Heart right ventricle (tissue), 16 donors: ENCODE measurements at regions of chr7 and their contacts with region 1.

Region 1: GRCh38 chr7:101804967-101805366 is 12.5 kb upstream of the CUX1 start:
- DNase-seq: no peak
- ATAC-seq: no peak
- H3K4me3 ChIP-seq: no peak overlapping the region
- H3K27ac ChIP-seq: no peak overlapping the region
- H3K4me1 ChIP-seq: peaks cover 0 to 12% (median 4%) of the 10 kb centered on the region in 9 donors
- H3K27me3 ChIP-seq: peaks cover 0 to 61% (median 32%) of the 10 kb centered on the region in 7 donors
- CTCF ChIP-seq: no peak

Region 2: DNA sequence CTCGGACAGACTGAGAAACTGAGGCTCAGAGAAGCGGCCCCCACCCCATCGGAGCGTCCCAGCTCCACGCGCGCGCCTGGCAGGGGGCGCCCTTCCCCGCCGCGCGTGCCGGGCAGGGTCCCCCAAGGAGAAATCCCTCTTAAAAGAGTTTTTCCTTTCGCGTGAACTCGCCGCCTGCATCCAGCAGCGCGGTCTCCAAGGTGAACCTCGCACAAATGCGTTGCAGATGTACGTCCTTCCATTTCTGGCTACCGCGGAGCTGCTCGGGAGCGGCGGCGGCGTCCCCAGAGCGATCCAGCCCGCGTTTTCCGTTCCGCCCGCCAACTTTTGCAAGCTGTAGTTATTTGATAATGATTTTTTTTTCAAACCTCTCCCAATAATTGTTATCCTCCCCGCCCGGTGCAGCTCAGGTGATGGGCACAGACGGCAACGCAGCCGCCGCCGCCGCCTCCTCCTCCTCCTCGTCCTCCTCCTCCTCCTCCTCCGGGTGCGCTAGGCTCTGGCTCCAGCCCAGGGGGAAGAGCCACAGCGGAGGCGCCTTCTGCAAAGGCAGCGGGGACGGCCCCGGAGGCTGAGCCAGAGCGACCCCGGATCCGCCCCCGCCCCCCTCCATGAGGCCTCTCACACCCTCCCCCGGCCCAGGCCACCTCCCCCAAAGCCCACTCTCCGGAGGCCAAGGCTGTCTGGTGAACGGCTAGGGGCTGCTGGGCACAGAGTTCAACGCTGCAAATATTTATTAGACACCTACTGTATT is 61.5 kb before region 1 on chr7:
- intact Hi-C with region 1: loop called in 6 of 10 experiments (anchors 5 to 10 kb)
- DNase-seq: peak; percentile 47 to 54
- ATAC-seq: peak; percentile 57 to 72 (median 70)
- H3K4me3 ChIP-seq: peak overlapping the region; percentile 19 to 62 (median 55)
- H3K27ac ChIP-seq: no peak overlapping the region
- H3K4me1 ChIP-seq: peaks cover 0 to 36% (median 6%) of the 10 kb centered on the region in 9 donors
- H3K27me3 ChIP-seq: peaks cover 4 to 35% (median 24%) of the 10 kb centered on the region in 7 donors
- CTCF ChIP-seq: peak; percentile 20 to 80 (median 66)